PC-9 (cell line): ENCODE measurements at regions of chr22 and their contacts with region 1.

Region 1: DNA sequence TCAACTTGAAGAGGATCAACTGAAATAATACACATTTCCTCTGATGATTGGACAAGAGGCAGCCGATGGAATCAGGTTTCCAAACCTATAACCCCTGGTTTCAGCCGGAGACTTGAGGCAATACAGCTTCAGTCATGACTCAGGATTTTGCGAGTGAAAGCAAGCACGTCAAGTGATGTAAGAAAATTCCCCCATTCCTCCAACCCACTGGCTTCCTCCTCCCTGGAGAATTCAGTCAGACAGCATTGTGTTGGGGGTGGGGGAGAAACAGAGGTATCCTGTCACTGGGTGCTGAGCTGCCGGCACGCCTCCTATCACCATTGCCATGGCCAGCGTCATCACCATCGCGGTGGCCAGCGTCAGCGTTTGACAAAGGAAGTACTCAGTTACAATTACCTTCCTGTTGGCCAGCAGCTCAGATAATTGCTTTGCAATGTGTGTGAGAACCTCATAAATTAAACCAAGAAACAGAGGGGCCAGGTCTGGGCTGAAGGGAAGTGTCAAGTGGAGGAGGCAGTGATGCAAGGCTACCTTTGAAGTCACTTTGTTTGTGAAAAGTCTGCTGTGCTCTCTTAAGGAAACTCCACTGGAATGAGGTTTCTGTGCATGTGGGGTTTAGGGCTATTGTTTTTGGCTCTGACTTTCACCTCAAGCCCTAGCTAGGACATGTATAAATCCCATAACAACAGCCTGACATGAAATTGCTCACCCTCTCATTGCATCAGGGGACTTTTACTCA is 50.2 kb downstream of the LIF start:
- DNase-seq: peak; percentile 88 to 100
- H3K4me3 ChIP-seq: no peak overlapping the region
- H3K27ac ChIP-seq: peak overlapping the region; percentile 99
- H3K4me1 ChIP-seq: peaks cover 71% of the 10 kb centered on the region
- H3K27me3 ChIP-seq: no peaks in the 10 kb centered on the region
- CTCF ChIP-seq: no peak

Region 2: DNA sequence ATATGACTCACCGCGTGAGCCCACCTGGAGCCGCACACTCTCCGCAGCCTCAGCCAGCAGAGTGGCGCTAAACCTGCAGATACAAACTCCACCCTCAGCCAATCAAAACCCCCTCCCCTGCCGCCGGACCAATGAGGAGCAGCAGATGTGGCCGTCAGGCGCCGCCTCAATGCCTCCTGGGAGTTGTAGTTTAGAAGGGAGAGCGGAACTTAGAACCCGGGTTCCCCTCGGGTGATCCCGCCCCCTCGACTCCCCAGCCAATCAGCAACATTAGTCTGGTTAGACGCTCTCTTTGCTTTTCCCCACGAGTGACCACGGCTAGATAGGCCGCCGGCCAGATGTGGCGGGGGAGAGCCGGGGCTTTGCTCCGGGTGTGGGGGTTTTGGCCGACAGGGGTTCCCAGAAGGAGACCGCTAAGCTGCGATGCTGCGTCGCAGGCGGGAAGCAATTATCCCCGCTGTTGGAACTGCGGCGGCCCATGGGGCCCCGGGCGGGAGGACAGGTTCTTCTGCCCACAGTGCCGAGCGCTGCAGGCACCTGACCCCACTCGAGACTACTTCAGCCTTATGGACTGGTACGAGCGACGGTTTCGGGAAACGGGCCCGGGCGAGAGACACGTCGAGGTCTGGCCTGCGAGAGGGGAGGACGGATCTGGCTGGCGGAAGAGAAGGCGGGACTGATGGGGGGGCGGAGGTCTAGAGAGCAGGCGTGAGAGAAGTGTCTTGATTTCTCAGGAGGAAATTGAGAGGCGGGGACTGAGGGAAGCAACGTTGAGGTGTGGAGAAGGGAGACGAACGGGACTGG is 1454.3 kb before region 1 on chr22 and contains the starts of genes CHEK2 and HSCB:
- CTCF ChIA-PET with region 1: interaction called, 16 read pairs
- POLR2A ChIA-PET with region 1: no interaction called
- intact Hi-C with region 1: no loop called
- DNase-seq: peak; percentile 93 to 97
- H3K4me3 ChIP-seq: peak within 1 kb of the TSS; percentile 88
- H3K27ac ChIP-seq: peak within 1 kb of the TSS; percentile 75
- H3K4me1 ChIP-seq: peaks cover 15% of the 10 kb centered on the region; the same call in 1 of the 2 replicates
- H3K27me3 ChIP-seq: no peaks in the 10 kb centered on the region
- CTCF ChIP-seq: no peak
- total RNA-seq, gene CHEK2: 27.2 and 32.8 TPM in 2 replicates
- total RNA-seq, gene HSCB: 8.3 and 10.0 TPM in 2 replicates

Region 3: GRCh38 chr22:30104501-30105156 is 91.7 kb before region 1 on chr22:
- CTCF ChIA-PET with region 1: no interaction called
- POLR2A ChIA-PET with region 1: no interaction called
- intact Hi-C with region 1: loop called (anchors 2 kb)
- DNase-seq: no peak
- H3K4me3 ChIP-seq: no peak overlapping the region
- H3K27ac ChIP-seq: no peak overlapping the region
- H3K4me1 ChIP-seq: no peaks in the 10 kb centered on the region; the same call in none of the 2 replicates
- H3K27me3 ChIP-seq: no peaks in the 10 kb centered on the region
- CTCF ChIP-seq: no peak

Region 4: GRCh38 chr22:30169002-30169401 is 27.3 kb before region 1 on chr22:
- CTCF ChIA-PET with region 1: no interaction called
- POLR2A ChIA-PET with region 1: interaction called, 14 read pairs
- intact Hi-C with region 1: no loop called
- DNase-seq: no peak
- H3K4me3 ChIP-seq: no peak overlapping the region
- H3K27ac ChIP-seq: no peak overlapping the region
- H3K4me1 ChIP-seq: no peaks in the 10 kb centered on the region
- H3K27me3 ChIP-seq: no peaks in the 10 kb centered on the region
- CTCF ChIP-seq: no peak

Region 5: GRCh38 chr22:30235687-30236170 is 39.4 kb after region 1 on chr22:
- CTCF ChIA-PET with region 1: no interaction called
- POLR2A ChIA-PET with region 1: no interaction called
- intact Hi-C with region 1: loop called (anchors 1 kb)
- DNase-seq: peak; percentile 91 to 98
- H3K4me3 ChIP-seq: no peak overlapping the region; the same call in 1 of the 2 replicates
- H3K27ac ChIP-seq: peak overlapping the region; percentile 95
- H3K4me1 ChIP-seq: peaks cover 73% of the 10 kb centered on the region
- H3K27me3 ChIP-seq: no peaks in the 10 kb centered on the region
- CTCF ChIP-seq: no peak

Region 6: DNA sequence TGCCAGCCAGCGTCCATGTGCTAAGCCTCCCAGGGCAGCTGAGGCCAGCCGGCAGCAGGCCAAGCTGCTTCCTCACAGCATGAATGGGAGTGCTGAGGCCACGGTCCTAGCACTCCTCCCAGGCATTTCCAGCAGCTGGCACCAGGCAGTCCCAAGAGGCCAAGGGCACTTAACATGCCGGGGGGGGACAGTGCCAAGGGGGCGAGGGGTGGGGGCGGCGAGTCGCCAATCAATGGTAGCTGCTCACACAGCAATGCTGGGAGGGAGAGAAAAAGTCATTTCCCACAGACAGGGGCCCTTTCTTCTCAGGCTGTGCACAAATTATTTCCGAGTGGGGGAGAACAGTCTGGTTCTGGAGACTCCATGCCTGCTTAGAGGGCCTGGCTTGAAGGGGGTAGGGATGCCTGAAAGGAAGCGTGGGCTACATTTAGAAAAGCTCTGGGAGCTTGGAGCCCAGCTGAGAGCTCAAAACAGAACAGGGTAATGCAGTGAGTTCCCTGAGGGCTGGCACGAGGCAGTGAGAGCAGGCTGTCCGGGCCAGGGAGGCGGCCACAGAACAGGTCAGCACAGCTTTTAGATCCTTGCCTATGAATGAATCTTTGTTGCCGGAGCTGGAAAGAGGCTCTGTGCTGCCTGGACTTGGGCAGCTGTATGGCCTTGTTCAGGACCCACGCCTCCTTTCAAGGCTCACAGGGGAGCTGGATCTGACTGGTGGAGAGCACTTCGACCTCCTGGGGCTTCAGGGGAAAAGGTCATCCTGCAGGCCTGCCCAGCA is 144.8 kb after region 1 on chr22:
- CTCF ChIA-PET with region 1: no interaction called
- POLR2A ChIA-PET with region 1: no interaction called
- intact Hi-C with region 1: no loop called
- DNase-seq: no peak
- H3K4me3 ChIP-seq: no peak overlapping the region
- H3K27ac ChIP-seq: no peak overlapping the region
- H3K4me1 ChIP-seq: no peaks in the 10 kb centered on the region
- H3K27me3 ChIP-seq: no peaks in the 10 kb centered on the region
- CTCF ChIP-seq: no peak

Region 7: GRCh38 chr22:30435674-30436126 is 239.4 kb after region 1 on chr22:
- CTCF ChIA-PET with region 1: no interaction called
- POLR2A ChIA-PET with region 1: no interaction called
- intact Hi-C with region 1: no loop called
- DNase-seq: no peak
- H3K4me3 ChIP-seq: no peak overlapping the region
- H3K27ac ChIP-seq: no peak overlapping the region
- H3K4me1 ChIP-seq: peaks cover 23% of the 10 kb centered on the region
- H3K27me3 ChIP-seq: no peaks in the 10 kb centered on the region
- CTCF ChIP-seq: no peak

Region 8: GRCh38 chr22:30979932-30980331 is 783.6 kb after region 1 on chr22:
- CTCF ChIA-PET with region 1: no interaction called
- POLR2A ChIA-PET with region 1: no interaction called
- intact Hi-C with region 1: no loop called
- DNase-seq: no peak
- H3K4me3 ChIP-seq: no peak overlapping the region
- H3K27ac ChIP-seq: no peak overlapping the region
- H3K4me1 ChIP-seq: no peaks in the 10 kb centered on the region
- H3K27me3 ChIP-seq: no peaks in the 10 kb centered on the region
- CTCF ChIP-seq: no peak